ENCODE measurements at regions of chr1 and their contacts with region 1.

Region 1: GRCh38 chr1:236590553-236591150 is 13.7 kb downstream of the HEATR1 start:
- DNase-seq: no peak
- H3K4me3 ChIP-seq: no peak overlapping the region
- H3K27ac ChIP-seq: no peak overlapping the region
- H3K4me1 ChIP-seq: no peaks in the 10 kb centered on the region
- H3K27me3 ChIP-seq: no peaks in the 10 kb centered on the region
- CTCF ChIP-seq: no peak

Region 2: DNA sequence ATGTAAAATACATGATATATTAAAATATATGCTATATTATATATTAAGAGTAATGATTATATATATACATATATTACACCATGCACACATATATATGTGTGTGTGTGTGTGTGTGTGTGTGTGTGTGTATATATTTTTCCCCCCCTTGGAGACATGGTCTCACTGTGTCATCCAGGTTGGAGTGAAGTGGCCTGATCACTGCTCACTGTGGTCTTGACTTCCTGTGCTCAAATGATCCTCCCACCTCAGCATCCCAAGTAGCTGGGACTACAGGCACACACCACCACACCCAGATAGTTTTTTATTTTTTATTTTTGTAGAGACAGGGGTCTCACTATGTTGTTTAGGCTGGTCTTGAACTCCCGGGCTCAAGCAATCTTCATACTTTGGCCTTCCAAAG is 1375.2 kb before region 1 on chr1:
- intact Hi-C with region 1: no loop called
- DNase-seq: no peak
- H3K4me3 ChIP-seq: no peak overlapping the region
- H3K27ac ChIP-seq: no peak overlapping the region
- H3K4me1 ChIP-seq: no peaks in the 10 kb centered on the region
- H3K27me3 ChIP-seq: no peaks in the 10 kb centered on the region
- CTCF ChIP-seq: no peak

Region 3: GRCh38 chr1:236543065-236543669 is 47.5 kb before region 1 on chr1:
- intact Hi-C with region 1: loop called (anchors 10 kb)
- DNase-seq: no peak
- H3K4me3 ChIP-seq: no peak overlapping the region
- H3K27ac ChIP-seq: no peak overlapping the region
- H3K4me1 ChIP-seq: no peaks in the 10 kb centered on the region
- H3K27me3 ChIP-seq: no peaks in the 10 kb centered on the region
- CTCF ChIP-seq: no peak

Region 4: DNA sequence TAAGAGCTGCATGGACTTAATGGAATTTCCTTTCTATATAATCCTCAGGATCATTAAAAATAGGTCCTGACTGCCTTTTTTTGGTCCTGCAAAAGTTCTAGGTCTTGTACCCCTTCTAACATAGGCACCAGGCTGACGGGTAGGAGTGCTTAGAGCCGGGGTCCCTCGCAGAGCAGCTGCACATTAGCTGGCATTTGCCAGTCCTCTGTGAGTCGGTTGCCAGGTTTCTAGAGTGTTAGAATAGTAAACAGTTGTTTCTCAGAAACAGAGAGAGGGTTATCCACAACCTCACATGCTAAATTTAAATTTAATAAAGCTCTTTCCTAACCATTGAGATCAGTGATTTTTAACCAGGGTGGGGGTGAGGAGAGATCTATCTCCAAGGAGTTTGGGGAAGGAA is 49.0 kb after region 1 on chr1:
- intact Hi-C with region 1: no loop called
- DNase-seq: no peak
- H3K4me3 ChIP-seq: no peak overlapping the region
- H3K27ac ChIP-seq: no peak overlapping the region
- H3K4me1 ChIP-seq: no peaks in the 10 kb centered on the region
- H3K27me3 ChIP-seq: no peaks in the 10 kb centered on the region
- CTCF ChIP-seq: no peak